Right ventricle myocardium superior (tissue), 1 donor: ENCODE measurements at regions of chr11 and their contacts with region 1.

Region 1: DNA sequence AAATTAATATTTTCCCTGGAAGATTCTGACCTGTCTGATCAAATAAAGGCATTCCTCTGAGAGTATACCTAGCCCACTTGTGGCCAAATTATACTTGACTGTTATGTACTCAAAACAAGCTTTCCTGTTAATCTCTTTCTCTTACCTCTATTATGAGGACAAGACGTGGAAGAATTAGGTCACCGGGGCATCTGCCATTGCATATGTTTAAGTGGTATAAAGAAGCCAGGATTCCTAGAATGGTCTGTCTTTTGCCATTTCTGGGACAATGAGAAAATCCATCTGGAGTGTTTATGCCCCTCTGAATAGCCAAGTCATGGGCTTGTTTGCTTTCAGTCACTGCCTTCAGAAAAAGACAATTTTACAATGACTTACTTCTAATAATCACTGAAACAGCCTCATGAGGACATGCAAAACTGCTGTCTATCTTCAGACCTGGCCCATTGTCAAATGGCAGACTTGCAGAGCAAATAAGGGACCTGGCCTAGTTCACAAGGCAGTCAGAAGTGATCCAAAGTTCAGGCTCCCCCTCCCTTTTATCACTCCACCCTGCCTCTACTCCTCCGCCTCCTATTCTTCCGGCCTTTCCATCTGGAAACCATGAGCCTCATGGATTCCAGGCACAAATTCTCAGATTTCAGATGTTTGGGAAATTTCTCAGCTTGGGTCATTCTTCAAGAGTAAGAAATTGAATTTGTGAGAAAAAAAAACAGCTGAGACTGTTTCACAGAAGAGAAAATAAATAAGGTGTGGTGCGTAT is 128.1 kb upstream of the LDLRAD3 start:
- DNase-seq: no peak
- ATAC-seq: peak; percentile 75

Region 2: DNA sequence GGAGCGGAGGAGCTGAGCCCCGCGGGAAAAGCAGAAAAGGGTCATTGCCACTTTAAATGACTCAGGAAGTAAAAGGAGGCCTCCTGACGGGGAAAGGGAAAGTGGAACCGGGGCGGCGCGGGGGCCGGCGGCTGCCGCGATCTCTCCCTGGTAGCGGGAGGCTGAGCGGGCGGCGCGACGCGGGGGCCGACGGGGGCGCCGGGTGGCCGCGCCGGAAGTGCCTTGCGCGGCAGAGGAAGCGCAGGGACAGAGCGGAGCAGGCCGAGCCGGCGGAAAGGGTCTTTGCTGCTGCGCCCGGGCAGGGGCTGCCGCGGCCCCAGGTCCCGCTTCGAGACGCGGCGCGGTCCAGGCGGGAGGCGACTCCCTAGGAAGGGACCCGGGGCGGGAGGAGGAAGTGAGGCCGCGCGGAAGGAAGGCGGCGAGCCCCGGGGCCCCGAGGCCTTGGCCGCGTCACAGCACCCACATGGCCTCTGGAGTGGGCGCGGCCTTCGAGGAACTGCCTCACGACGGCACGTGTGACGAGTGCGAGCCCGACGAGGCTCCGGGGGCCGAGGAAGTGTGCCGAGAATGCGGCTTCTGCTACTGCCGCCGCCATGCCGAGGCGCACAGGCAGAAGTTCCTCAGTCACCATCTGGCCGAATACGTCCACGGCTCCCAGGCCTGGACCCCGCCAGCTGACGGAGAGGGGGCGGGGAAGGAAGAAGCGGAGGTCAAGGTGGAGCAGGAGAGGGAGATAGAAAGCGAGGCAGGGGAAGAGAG is 152.9 kb before region 1 on chr11 and contains the start of gene TRIM44:
- intact Hi-C with region 1: no loop called
- DNase-seq: peak; percentile 90
- ATAC-seq: peak; percentile 98
- total RNA-seq, gene TRIM44: 34.0 TPM

Region 3: GRCh38 chr11:35765211-35765610 is 50.5 kb before region 1 on chr11:
- intact Hi-C with region 1: no loop called
- DNase-seq: no peak
- ATAC-seq: no peak

Region 4: DNA sequence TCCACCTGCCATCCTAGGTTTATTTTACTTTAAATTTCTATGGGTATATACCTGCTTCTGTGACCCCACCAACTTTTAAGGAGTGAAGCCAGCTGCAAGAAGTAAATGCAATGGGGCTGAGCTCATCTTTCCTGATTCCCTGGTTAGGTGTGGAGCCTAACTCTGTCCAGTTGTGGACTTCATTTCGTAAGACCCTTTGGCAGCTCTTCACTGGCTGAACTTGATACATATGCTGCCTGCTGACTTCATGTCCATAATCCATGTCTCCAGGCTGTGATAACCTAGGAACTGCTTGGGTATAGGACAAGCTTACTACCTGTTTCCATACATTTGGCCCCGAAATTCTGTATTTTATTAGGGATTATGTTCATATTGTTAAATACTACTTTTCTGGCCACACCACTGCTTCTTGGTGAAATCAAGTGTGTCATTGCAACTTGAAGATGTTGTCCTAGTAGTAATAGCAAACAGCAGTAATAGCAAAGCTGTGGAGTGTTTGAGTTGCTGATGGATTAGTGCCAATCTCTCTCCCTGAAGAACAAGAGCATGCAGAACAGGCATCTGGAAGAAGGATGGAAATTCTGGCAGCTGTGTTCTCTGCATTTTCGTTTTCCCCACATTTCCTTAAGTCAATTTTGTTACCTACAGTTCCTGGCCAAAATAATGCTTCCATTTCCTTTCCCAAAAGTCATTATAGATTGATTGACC is 159.3 kb after region 1 on chr11:
- intact Hi-C with region 1: no loop called
- DNase-seq: no peak
- ATAC-seq: no peak

Region 5: GRCh38 chr11:36265793-36266628 is 450.3 kb after region 1 on chr11:
- intact Hi-C with region 1: loop called (anchors 10 kb)
- DNase-seq: peak; percentile 65
- ATAC-seq: peak; percentile 79